ENCODE measurements at regions of chr1 and their contacts with region 1.

Region 1: DNA sequence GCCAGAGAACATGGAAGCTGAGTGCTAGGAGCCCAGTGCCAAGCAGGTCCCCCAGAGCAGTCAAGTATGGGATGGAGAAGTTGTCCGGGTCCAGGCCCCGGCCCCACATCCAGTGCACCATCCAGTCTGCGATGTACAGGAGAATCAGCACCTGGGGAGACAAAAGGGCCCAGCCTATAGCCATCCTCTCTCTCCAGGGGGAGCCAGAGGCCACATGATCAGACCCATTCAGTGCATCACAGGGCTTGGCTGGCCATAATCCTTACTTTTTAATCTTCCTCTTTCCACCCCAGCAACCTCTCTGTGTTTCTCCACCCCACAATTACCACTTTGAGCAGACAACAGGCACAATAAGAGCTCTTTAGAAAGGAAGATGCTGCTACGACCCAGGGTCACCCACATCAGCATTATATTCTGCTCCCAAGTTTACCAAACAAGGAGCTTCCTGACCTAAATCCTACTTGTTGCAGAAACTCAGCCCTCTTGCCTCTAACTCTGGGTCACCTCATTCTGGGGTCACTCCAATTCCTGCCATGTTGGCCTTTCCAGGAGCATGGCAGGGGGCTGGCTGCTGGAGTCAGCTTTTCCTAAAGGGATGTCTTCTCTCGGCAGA is 16.4 kb upstream of the RAB29 start:
- DNase-seq: peak; percentile 89
- H3K4me3 Mint-ChIP-seq: no peak overlapping the region
- H3K27ac Mint-ChIP-seq: no peak overlapping the region
- H3K4me1 Mint-ChIP-seq: no peaks in the 10 kb centered on the region
- H3K27me3 Mint-ChIP-seq: no peaks in the 10 kb centered on the region
- CTCF ChIP-seq: peak; percentile 99

Region 2: GRCh38 chr1:205645519-205645918 is 146.2 kb before region 1 on chr1:
- CTCF ChIA-PET with region 1: no interaction called
- POLR2A ChIA-PET with region 1: no interaction called
- intact Hi-C with region 1: no loop called
- DNase-seq: no peak
- H3K4me3 Mint-ChIP-seq: no peak overlapping the region
- H3K27ac Mint-ChIP-seq: no peak overlapping the region
- H3K4me1 Mint-ChIP-seq: no peaks in the 10 kb centered on the region
- H3K27me3 Mint-ChIP-seq: no peaks in the 10 kb centered on the region
- CTCF ChIP-seq: no peak

Region 3: DNA sequence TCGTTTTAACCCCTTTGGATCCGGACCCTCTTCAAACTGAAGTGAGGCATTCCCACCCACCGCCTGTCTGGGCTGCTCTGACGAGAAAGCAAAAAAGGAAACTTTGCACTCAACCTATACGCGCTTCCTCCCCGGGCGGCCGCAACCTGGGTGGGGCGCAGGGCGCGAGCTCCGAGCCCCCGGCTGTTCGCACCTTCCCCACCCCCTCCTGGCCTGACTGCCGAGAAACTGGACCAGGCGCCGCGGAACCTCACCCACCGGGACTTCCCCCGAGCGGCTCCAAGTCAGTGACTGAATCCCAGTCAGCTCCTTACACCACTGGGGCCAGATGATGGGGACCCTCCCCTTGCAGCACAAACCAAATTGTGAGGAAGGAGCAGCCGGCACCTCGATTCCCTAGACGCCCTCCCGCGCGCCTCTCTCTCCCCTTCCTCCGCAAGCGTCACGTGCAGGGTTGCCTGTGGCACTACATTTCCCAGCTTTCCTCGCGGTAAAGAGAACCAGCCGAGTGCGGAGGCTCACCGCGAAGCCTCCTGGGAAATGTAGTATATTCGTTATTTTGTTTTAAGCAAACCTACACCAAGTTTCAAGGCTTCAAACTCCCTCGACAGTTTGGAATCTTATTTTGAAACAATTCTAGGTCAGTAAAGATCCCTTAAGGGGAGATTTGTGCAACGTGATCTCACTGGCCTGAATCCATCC is 16.5 kb before region 1 on chr1 and contains the start of gene RAB29:
- CTCF ChIA-PET with region 1: interaction called, 17 read pairs
- POLR2A ChIA-PET with region 1: interaction called, 20 read pairs
- intact Hi-C with region 1: no loop called
- DNase-seq: peak; percentile 95
- H3K4me3 Mint-ChIP-seq: peak within 1 kb of the TSS; percentile 88
- H3K27ac Mint-ChIP-seq: peak within 1 kb of the TSS; percentile 89
- H3K4me1 Mint-ChIP-seq: peaks cover 31% of the 10 kb centered on the region
- H3K27me3 Mint-ChIP-seq: no peaks in the 10 kb centered on the region
- CTCF ChIP-seq: no peak
- total RNA-seq, gene RAB29: 33.6 and 44.8 TPM in 2 replicates

Region 4: GRCh38 chr1:205812878-205813754 is 21.4 kb after region 1 on chr1 and contains the start of gene SLC41A1:
- CTCF ChIA-PET with region 1: interaction called, 54 read pairs
- POLR2A ChIA-PET with region 1: interaction called, 4 read pairs
- intact Hi-C with region 1: no loop called
- DNase-seq: peak; percentile 98
- H3K4me3 Mint-ChIP-seq: peak within 1 kb of the TSS; percentile 87
- H3K27ac Mint-ChIP-seq: peak within 1 kb of the TSS; percentile 40
- H3K4me1 Mint-ChIP-seq: peaks cover 42% of the 10 kb centered on the region
- H3K27me3 Mint-ChIP-seq: no peaks in the 10 kb centered on the region
- CTCF ChIP-seq: no peak
- total RNA-seq, gene SLC41A1: 48.8 and 49.7 TPM in 2 replicates

Region 5: GRCh38 chr1:205896320-205896719 is 104.6 kb after region 1 on chr1:
- CTCF ChIA-PET with region 1: interaction called, 12 read pairs
- POLR2A ChIA-PET with region 1: no interaction called
- intact Hi-C with region 1: no loop called
- DNase-seq: no peak
- H3K4me3 Mint-ChIP-seq: no peak overlapping the region
- H3K27ac Mint-ChIP-seq: no peak overlapping the region
- H3K4me1 Mint-ChIP-seq: no peaks in the 10 kb centered on the region
- H3K27me3 Mint-ChIP-seq: peaks cover 14% of the 10 kb centered on the region
- CTCF ChIP-seq: no peak

Region 6: DNA sequence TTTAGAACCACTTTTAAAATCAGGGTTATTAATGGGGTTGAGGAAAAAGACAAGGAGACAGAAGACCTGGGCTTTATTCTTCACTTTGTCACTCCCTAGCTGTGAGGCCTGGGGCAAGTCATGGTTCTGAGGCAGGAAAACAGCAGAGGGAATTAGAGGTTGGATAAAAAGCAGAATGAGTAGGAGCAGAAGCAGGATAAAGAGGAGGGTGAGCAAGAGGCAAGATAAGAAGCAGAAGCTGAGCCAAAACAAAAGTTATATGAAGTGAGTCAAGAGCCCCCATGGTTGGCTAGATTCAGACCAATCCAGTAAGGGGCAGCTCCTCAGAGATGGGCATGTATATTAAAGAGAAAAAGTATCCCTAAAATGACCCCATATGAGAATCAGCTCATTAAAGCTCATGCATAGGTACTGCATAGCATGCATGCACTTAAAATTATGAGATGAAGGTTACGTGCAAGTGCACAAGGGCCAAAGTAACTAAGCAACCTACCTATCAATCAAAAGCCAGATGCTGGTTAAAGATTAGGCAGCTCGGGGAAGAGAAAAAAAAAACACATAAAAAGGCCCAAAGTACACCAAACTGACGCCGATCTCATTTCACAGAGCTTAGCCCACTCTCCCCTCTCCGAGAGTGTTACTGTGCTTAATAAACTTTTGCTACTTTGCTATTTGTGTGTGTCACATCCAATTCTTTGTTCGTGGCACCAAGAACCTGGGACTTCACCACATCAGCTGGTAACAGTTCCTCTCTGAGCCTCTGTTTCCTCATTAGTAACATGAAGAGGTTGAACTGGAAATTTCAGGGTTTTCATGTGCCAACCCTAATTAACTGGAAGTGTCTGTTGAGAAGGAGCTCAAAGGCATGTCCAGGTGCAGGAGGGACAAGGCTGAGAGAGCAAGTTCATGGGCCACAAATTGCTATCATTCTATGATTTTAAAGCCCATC is 323.3 kb after region 1 on chr1:
- CTCF ChIA-PET with region 1: interaction called, 16 read pairs
- POLR2A ChIA-PET with region 1: no interaction called
- intact Hi-C with region 1: no loop called
- DNase-seq: no peak
- H3K4me3 Mint-ChIP-seq: no peak overlapping the region
- H3K27ac Mint-ChIP-seq: no peak overlapping the region
- H3K4me1 Mint-ChIP-seq: peaks cover 14% of the 10 kb centered on the region
- H3K27me3 Mint-ChIP-seq: peaks cover 24% of the 10 kb centered on the region
- CTCF ChIP-seq: no peak

Region 7: GRCh38 chr1:206649261-206649921 is 857.7 kb after region 1 on chr1:
- CTCF ChIA-PET with region 1: no interaction called
- POLR2A ChIA-PET with region 1: no interaction called
- intact Hi-C with region 1: no loop called
- DNase-seq: no peak
- H3K4me3 Mint-ChIP-seq: no peak overlapping the region
- H3K27ac Mint-ChIP-seq: no peak overlapping the region
- H3K4me1 Mint-ChIP-seq: peaks cover 16% of the 10 kb centered on the region
- H3K27me3 Mint-ChIP-seq: no peaks in the 10 kb centered on the region
- CTCF ChIP-seq: no peak

Measured in MCF 10A (cell line).